ENCODE measurements at regions of chr5 and their contacts with region 1.

Region 1: DNA sequence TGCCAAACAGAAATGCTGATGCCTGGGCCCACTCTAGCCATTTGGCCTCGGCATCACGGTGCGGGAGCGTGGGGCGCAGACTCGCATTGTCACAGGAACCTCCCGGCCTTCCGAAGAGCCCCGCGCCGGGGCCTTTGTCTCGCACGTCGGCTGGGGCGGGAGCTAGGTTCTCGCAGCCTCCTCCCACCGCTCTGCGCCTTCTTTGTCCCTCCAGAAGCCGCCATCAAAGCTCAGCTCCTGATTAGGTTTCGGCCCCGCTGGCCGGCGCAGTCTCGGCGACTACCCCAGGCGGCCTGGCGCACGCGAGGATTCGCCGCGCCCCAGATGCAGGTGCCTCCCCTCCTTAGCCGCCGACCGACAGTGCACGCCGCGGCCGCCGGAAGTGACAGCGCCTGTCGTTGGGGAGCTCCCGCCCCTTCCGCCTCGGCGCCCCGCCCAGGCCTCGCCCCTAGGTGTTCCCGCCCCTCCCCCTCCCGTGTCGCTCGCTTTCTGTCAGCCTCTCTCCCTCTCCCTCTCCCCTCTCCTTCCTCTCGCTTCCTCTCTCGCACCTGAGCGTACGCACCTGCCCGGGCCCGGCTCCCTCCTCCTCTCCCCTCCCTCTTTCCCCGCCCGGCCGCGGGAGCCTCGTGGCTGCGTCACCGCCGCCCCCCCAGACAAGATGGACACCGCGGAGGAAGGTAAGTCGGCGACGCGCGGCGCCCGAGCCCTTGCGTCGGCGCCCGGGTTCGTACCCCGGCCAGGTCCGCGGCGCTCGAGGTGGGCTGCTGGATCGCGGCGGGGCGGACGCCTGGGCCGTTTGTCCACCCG is at the start of gene MARCHF6:
- DNase-seq: peak; percentile 66
- H3K4me3 ChIP-seq: peak within 1 kb of the TSS; percentile 82
- H3K27ac ChIP-seq: peak within 1 kb of the TSS; percentile 98
- H3K27me3 ChIP-seq: no peaks in the 10 kb centered on the region
- CTCF ChIP-seq: no peak
- polyA plus RNA-seq, gene MARCHF6: 102 and 136 TPM in 2 replicates

Region 2: GRCh38 chr5:9916177-9916576 is 437.3 kb before region 1 on chr5:
- CTCF ChIA-PET with region 1: no interaction called
- POLR2A ChIA-PET with region 1: no interaction called
- DNase-seq: no peak
- H3K4me3 ChIP-seq: no peak overlapping the region
- H3K27ac ChIP-seq: no peak overlapping the region
- H3K27me3 ChIP-seq: peaks cover 2% of the 10 kb centered on the region
- CTCF ChIP-seq: no peak

Region 3: GRCh38 chr5:10333154-10334006 is 20.1 kb before region 1 on chr5:
- CTCF ChIA-PET with region 1: interaction called, 8 read pairs
- POLR2A ChIA-PET with region 1: interaction called, 24 read pairs
- DNase-seq: no peak
- H3K4me3 ChIP-seq: peak overlapping the region; percentile 60
- H3K27ac ChIP-seq: no peak overlapping the region
- H3K27me3 ChIP-seq: no peaks in the 10 kb centered on the region
- CTCF ChIP-seq: no peak

Region 4: GRCh38 chr5:10367579-10367978 is 14.1 kb after region 1 on chr5:
- CTCF ChIA-PET with region 1: interaction called, 12 read pairs
- POLR2A ChIA-PET with region 1: interaction called, 4 read pairs
- DNase-seq: no peak
- H3K4me3 ChIP-seq: no peak overlapping the region
- H3K27ac ChIP-seq: no peak overlapping the region
- H3K27me3 ChIP-seq: no peaks in the 10 kb centered on the region
- CTCF ChIP-seq: no peak

Region 5: DNA sequence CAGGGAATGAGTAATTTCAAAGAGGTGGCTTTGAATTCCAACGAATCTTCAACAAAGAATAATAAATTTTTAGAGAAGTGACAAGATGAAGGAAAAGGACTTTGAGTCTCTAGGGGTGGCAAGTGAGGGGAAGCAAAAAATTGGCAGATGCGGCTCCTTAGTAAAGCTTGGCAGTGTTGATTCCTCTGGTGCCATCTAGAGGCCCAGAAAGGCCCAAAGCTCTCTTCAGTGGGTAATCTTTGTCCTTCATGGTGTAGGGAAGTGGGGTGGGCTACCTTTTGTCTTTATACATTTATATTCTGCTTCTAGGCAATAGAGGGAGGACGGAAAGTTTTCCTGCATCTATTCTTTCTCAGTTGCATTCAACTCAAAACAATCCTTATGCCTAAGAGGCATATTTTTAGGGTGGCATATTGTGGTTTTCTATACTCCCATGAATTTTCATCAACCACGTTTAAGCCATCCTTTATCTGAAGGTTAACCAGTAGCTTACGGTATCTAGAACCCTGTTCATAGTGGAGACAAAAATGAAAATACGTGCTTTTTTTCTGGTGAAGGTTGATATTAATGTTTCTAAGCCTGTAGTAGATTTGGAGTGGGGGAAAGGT is 70.8 kb after region 1 on chr5:
- CTCF ChIA-PET with region 1: interaction called, 10 read pairs
- POLR2A ChIA-PET with region 1: no interaction called
- DNase-seq: no peak
- H3K4me3 ChIP-seq: no peak overlapping the region
- H3K27ac ChIP-seq: no peak overlapping the region
- H3K27me3 ChIP-seq: no peaks in the 10 kb centered on the region
- CTCF ChIP-seq: peak; percentile 65